ENCODE measurements at regions of chr6 and their contacts with region 1.

Region 1: DNA sequence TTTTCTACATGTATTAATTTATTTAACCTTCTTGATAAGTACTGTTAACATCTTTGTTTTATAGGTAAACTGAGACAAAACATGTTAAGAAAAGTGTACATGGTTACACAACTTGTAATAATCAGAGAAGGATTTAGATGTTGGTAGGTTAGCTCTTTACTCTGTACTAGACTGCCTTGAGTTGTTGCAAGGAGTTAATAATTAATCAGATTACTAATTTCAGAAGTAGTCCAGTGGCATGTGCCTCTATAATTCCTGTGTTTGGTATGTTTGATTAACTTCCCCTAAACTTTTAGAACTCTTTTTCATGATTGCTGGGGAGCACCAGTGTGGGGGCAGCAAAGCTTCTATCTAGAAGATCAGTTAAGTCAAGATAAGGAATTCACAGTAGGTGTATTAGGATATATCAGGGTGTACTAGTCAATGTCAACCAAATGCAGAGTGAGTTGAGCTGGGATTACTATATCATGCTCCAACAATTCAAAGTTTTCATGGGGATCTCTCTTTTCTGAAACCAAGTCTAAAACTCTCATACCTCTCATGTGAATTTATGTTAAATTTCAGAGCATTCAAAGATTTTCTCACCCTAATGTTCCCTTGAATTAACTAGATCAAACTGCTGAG is 129.7 kb upstream of the AHI1 start:
- DNase-seq: no peak
- H3K4me3 Mint-ChIP-seq: no peak overlapping the region
- H3K27ac Mint-ChIP-seq: peak overlapping the region; percentile 68
- H3K4me1 Mint-ChIP-seq: peaks cover 80% of the 10 kb centered on the region
- H3K27me3 Mint-ChIP-seq: no peaks in the 10 kb centered on the region

Region 2: DNA sequence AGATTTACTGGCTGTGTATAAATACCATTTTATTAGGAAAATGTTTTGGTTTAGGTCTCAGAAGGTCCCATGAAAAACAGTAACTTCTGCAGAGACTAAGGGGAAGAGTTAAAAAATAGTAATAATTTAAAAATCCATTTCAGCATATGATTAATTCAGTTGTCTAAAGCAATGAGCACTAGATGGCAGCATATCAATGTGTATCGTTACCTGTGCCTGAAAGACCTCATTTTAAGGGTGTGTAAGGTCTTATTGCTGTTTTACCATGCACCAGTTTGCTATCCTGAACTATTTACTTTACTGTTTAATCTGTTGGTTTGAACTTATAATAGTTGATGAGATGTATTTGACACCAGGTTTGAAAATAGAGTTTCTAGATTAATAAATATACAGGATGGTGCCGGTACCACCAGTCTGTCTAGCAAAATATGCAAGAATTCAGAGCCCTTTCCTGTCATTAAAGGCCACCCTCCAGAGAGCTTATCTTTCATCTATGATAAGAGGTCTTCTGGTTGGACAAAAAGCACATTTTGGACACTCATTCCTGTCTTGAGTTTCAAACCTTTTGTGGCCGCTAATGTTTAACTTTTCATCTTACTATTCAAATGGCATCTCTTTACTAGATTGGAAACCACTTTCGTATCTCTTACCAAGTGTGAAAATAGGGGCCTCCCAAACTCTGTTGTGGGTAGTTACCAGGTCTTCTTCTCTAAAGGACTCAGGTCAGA is 120.8 kb before region 1 on chr6:
- intact Hi-C with region 1: loop called (anchors 1 kb)
- DNase-seq: no peak
- H3K4me3 Mint-ChIP-seq: no peak overlapping the region
- H3K27ac Mint-ChIP-seq: no peak overlapping the region
- H3K4me1 Mint-ChIP-seq: peaks cover 11% of the 10 kb centered on the region
- H3K27me3 Mint-ChIP-seq: no peaks in the 10 kb centered on the region

Region 3: GRCh38 chr6:135577059-135577538 is 50.1 kb before region 1 on chr6:
- intact Hi-C with region 1: loop called (anchors 1 kb)
- DNase-seq: no peak
- H3K4me3 Mint-ChIP-seq: peak overlapping the region; percentile 49
- H3K27ac Mint-ChIP-seq: peak overlapping the region; percentile 97
- H3K4me1 Mint-ChIP-seq: peaks cover 48% of the 10 kb centered on the region
- H3K27me3 Mint-ChIP-seq: no peaks in the 10 kb centered on the region

Region 4: DNA sequence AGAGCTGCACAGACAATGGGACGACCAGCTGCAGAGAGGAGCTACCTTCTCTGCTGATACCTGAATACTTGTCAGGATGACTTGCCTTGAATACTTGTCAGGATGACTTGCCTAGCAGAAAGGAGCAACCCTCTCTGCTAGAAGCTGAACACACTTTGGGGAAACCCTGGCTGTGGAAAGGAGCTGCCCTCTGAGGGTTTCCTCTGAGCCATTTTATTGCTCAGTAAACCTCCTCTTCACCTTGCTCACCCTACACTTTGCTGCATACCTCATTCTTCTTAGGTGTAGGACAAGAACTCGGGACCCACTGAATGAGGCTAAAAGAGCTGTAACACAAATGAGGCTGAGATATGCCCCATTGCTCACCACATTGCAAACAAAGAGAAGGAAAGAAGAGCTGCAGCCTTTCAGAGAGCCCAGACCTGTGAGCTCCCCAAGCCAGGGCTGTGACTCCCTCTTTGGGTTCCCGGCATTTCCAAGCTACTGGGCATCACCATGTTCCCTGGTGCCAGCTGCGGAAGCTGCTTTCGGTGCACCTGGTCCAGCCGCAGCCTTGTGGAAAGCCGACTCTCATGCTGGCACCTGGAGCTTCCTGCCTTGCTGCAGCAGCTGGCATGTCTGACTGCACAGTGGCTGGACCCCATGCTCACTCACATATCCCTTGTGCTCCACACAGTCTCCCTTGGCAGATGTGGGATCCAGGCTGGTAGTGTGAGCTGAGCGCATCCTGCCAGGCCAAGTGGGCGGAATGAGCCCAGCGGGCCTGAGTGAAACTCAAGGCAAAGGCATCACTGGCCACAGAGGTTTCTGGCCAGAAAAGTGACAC is 23.0 kb before region 1 on chr6:
- intact Hi-C with region 1: loop called (anchors 1 kb)
- DNase-seq: no peak
- H3K4me3 Mint-ChIP-seq: no peak overlapping the region
- H3K27ac Mint-ChIP-seq: peak overlapping the region; percentile 90
- H3K4me1 Mint-ChIP-seq: peaks cover 46% of the 10 kb centered on the region
- H3K27me3 Mint-ChIP-seq: no peaks in the 10 kb centered on the region

Region 5: GRCh38 chr6:135651964-135652755 is 25.0 kb after region 1 on chr6:
- intact Hi-C with region 1: loop called (anchors 1 kb)
- DNase-seq: no peak
- H3K4me3 Mint-ChIP-seq: peak overlapping the region; percentile 57
- H3K27ac Mint-ChIP-seq: peak overlapping the region; percentile 91
- H3K4me1 Mint-ChIP-seq: peaks cover 44% of the 10 kb centered on the region
- H3K27me3 Mint-ChIP-seq: no peaks in the 10 kb centered on the region

Region 6: DNA sequence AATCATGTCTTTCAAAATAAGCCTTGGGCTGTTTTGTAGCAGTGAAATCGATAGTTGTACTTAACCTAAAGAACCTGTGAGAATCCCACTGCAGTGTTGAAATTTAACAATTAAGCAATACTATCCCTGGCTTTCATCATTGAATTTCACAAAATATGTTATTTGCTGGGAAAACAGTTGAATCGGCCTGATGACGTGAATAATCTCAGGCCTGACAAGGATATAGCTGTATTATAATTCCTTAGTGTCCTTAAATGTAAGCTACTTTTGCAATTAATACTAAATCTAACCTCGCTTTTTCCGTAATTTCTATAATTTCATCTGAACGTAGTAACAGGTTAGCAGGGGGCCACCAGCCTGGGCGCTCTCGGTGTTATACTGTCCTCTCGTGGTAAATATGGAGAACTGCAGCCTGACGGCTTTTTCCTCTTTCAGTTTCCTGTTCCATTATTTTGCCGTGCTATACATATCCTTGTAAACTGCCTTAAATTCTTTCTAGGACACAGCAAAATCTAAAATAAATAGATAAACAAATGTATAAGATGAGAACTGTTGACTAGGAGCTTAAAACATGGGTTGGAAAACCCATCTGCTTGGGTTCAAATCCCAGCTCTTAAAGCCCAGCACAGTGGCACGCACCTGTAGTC is 598.9 kb after region 1 on chr6:
- intact Hi-C with region 1: loop called (anchors 1 kb)
- DNase-seq: peak; percentile 35
- H3K4me3 Mint-ChIP-seq: peak overlapping the region; percentile 0
- H3K27ac Mint-ChIP-seq: peak overlapping the region; percentile 25
- H3K4me1 Mint-ChIP-seq: peaks cover 27% of the 10 kb centered on the region
- H3K27me3 Mint-ChIP-seq: no peaks in the 10 kb centered on the region